ENCODE measurements at regions of chr2 and their contacts with region 1.

Region 1: GRCh38 chr2:170217778-170218251 is 39.9 kb downstream of the MYO3B start:
- DNase-seq: no peak
- ATAC-seq: peak in 1 of 2 donors; percentile 66
- H3K4me3 ChIP-seq: no peak overlapping the region
- H3K27ac ChIP-seq: peak overlapping the region in 3 of 4 donors; percentile 33 to 65 (median 41)
- H3K4me1 ChIP-seq: peaks cover 14 to 17% of the 10 kb centered on the region in 2 donors
- H3K27me3 ChIP-seq: no peaks in the 10 kb centered on the region
- CTCF ChIP-seq: no peak
- POLR2A ChIP-seq: no peak

Region 2: GRCh38 chr2:169670215-169670651 is 547.6 kb before region 1 on chr2:
- in situ Hi-C with region 1: no loop called
- intact Hi-C with region 1: no loop called
- DNase-seq: no peak
- ATAC-seq: no peak
- H3K4me3 ChIP-seq: no peak overlapping the region
- H3K27ac ChIP-seq: no peak overlapping the region
- H3K4me1 ChIP-seq: no peaks in the 10 kb centered on the region
- H3K27me3 ChIP-seq: no peaks in the 10 kb centered on the region
- CTCF ChIP-seq: no peak
- POLR2A ChIP-seq: no peak

Region 3: DNA sequence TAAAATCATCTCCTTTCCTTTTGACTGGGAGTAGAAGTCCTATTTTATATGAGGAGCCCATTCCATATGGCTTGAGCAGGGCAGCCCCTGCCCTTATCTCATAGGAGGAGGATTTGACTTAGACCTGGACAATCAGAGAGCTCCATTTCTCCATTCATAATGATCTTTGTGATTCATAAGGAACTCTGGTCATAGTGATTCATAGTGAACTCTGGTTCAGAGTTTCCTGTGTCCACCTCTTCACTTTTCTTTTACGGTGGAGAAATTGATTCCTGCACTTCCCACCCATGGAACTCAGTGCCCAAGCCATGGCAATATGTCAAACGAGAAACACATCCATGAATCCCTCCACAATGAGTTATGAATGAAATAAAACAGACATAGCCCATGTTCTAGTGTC is 52.7 kb before region 1 on chr2:
- in situ Hi-C with region 1: no loop called
- intact Hi-C with region 1: loop called (anchors 5 kb)
- DNase-seq: no peak
- ATAC-seq: no peak
- H3K4me3 ChIP-seq: no peak overlapping the region
- H3K27ac ChIP-seq: no peak overlapping the region
- H3K4me1 ChIP-seq: peaks cover 0 to 5% of the 10 kb centered on the region in 2 donors
- H3K27me3 ChIP-seq: no peaks in the 10 kb centered on the region
- CTCF ChIP-seq: no peak
- POLR2A ChIP-seq: no peak